ENCODE measurements at regions of chr10 and their contacts with region 1.

Region 1: GRCh38 chr10:92591550-92592022 is 1.3 kb upstream of the KIF11 start:
- DNase-seq: peak; percentile 74
- H3K4me3 ChIP-seq: peak overlapping the region; percentile 86
- H3K27me3 ChIP-seq: no peaks in the 10 kb centered on the region
- CTCF ChIP-seq: no peak

Region 2: GRCh38 chr10:92719991-92720830 is 128.6 kb after region 1 on chr10:
- CTCF ChIA-PET with region 1: no interaction called
- POLR2A ChIA-PET with region 1: no interaction called
- DNase-seq: no peak
- H3K4me3 ChIP-seq: no peak overlapping the region
- H3K27me3 ChIP-seq: peaks cover 8% of the 10 kb centered on the region
- CTCF ChIP-seq: no peak

Region 3: DNA sequence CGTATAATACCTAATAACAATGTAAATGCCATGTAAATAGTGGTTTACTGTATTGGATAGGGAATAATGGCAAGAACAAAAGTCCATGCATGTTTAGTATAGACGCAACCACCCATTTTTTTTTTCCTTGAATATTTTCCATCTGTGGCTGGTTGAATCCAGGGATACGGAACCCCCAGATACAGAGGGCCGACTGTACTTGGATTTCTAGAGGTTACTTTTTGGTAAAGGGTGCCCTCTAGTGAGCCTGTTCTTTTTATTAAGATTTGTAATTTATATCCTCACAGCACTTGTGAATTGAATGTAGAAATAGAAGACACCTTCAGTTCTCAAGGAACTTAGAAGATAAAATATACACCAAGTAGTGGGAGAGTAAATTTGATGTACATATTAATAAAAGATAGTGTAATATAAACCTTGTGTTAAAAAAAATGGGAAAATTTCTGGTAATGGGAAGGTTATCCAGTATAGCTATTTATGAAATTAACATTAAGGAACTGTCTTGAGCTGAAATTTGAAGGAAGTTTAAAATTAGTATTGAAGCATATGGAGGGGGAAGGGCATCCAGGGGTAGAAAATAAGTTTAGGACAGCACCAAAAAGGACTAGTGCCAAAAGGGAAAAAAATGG is 288.8 kb after region 1 on chr10:
- CTCF ChIA-PET with region 1: interaction called, 10 read pairs
- POLR2A ChIA-PET with region 1: no interaction called
- DNase-seq: peak; percentile 9
- H3K4me3 ChIP-seq: no peak overlapping the region
- H3K27me3 ChIP-seq: no peaks in the 10 kb centered on the region
- CTCF ChIP-seq: peak; percentile 57